ENCODE measurements at regions of chr6 and their contacts with region 1.

Region 1: GRCh38 chr6:142692942-142693341 is 252.0 kb downstream of the HIVEP2 start:
- DNase-seq: peak; percentile 56 to 66
- H3K4me3 ChIP-seq: no peak overlapping the region
- H3K4me3 Mint-ChIP-seq: no peak overlapping the region
- H3K27ac Mint-ChIP-seq: no peak overlapping the region
- H3K4me1 ChIP-seq: no peaks in the 10 kb centered on the region
- H3K4me1 Mint-ChIP-seq: no peaks in the 10 kb centered on the region
- H3K27me3 ChIP-seq: no peaks in the 10 kb centered on the region; the same call in 1 of the 2 replicates
- H3K27me3 Mint-ChIP-seq: peaks cover 3% of the 10 kb centered on the region
- CTCF ChIP-seq: peak; percentile 81 to 90

Region 2: DNA sequence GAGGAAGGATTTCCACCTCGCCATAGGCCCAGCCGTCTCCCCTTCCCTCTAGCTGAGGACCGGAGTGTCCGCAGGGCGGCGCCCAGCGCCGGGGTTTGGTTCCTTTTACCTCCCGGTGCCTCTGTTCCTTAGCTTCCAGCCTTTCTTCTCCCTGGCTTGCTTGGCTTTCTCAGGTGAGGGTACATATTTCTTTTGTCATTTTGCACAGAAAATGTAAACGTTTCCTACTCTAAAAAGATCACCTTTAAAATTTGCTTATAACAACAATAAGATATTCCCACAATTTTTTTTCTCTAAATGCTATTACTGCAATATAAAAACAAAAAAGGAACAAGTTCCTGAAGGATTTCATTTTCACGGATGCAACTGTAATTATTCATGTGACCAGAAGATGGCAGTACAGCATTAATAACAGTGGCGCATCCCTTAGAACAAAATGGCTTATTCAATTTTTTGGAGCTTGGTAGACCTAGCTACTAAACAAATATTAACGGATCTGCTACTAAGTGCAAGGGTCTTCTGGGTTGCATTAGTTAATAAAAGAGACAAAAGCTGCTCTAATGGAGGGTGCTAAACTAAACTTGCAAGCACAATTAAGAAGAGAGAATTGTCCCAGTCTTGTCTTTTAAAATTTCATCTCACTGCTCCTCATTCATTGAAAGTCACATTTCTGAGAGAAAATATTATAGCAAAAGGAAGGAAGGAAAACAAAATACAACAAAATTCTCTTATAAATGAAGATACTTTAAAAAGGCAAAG is 218.2 kb before region 1 on chr6:
- CTCF ChIA-PET with region 1: interaction called, 4 read pairs
- POLR2A ChIA-PET with region 1: no interaction called
- intact Hi-C with region 1: loop called (anchors 1 kb)
- DNase-seq: peak; percentile 67 to 69
- H3K4me3 ChIP-seq: no peak overlapping the region
- H3K4me3 Mint-ChIP-seq: no peak overlapping the region
- H3K27ac Mint-ChIP-seq: no peak overlapping the region
- H3K4me1 ChIP-seq: no peaks in the 10 kb centered on the region
- H3K4me1 Mint-ChIP-seq: no peaks in the 10 kb centered on the region
- H3K27me3 ChIP-seq: no peaks in the 10 kb centered on the region
- H3K27me3 Mint-ChIP-seq: peaks cover 1% of the 10 kb centered on the region
- CTCF ChIP-seq: peak; percentile 57 to 60

Region 3: DNA sequence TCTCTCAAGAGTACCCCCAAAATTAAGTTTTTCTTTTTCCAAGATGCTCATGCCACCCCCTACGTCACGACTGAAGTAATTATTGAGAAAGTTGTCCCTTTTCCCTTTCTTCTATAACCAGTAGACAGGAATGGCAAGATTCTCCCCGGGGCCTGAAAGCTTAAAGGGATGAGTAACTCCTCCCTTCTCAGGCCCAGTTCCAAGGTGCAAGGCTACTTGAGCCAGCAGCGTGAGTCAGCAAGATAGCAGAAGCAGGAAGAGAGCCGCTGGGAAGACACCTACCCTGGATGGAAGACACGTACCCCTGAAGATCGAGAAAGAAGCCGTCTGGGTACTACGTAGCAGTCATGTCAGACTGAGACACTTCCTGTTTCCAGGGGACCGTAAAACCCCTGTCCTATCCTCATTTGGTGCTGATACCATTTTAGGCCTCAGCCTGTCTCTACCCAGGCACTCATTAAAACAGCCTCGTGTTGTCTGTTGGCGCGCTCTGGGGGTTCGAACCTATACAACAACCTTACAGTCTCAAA is 150.2 kb before region 1 on chr6:
- CTCF ChIA-PET with region 1: no interaction called
- POLR2A ChIA-PET with region 1: no interaction called
- intact Hi-C with region 1: no loop called
- DNase-seq: peak in 1 of 2 experiments; percentile 43
- H3K4me3 ChIP-seq: no peak overlapping the region
- H3K4me3 Mint-ChIP-seq: no peak overlapping the region
- H3K27ac Mint-ChIP-seq: no peak overlapping the region
- H3K4me1 ChIP-seq: no peaks in the 10 kb centered on the region
- H3K4me1 Mint-ChIP-seq: no peaks in the 10 kb centered on the region
- H3K27me3 ChIP-seq: no peaks in the 10 kb centered on the region; the same call in 1 of the 2 replicates
- H3K27me3 Mint-ChIP-seq: no peaks in the 10 kb centered on the region
- CTCF ChIP-seq: no peak

Region 4: DNA sequence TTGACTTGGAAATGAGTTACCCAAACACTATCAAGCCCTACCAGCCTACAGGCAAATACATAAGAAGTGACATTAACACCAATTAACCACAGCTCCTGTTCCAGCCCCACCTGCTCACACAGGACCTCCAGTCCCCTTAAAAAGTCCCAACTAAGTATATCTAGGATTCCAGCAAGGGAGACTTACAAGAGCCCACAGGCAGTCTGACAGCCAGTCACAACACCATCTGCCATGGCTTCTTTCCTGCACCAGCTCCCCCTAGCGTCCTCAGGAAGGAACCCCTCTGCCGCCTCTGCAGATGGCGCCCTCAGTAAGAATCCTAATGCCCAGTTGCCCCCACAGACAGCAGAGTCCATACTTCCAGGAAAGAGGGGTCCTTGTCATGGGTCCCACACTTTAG is 129.9 kb after region 1 on chr6:
- CTCF ChIA-PET with region 1: no interaction called
- POLR2A ChIA-PET with region 1: no interaction called
- intact Hi-C with region 1: loop called (anchors 1 kb)
- DNase-seq: peak in 1 of 2 experiments; percentile 50
- H3K4me3 ChIP-seq: no peak overlapping the region
- H3K4me3 Mint-ChIP-seq: no peak overlapping the region
- H3K27ac Mint-ChIP-seq: no peak overlapping the region
- H3K4me1 ChIP-seq: no peaks in the 10 kb centered on the region
- H3K4me1 Mint-ChIP-seq: peaks cover 6% of the 10 kb centered on the region
- H3K27me3 ChIP-seq: no peaks in the 10 kb centered on the region
- H3K27me3 Mint-ChIP-seq: no peaks in the 10 kb centered on the region
- CTCF ChIP-seq: peak; percentile 29 to 57

Region 5: DNA sequence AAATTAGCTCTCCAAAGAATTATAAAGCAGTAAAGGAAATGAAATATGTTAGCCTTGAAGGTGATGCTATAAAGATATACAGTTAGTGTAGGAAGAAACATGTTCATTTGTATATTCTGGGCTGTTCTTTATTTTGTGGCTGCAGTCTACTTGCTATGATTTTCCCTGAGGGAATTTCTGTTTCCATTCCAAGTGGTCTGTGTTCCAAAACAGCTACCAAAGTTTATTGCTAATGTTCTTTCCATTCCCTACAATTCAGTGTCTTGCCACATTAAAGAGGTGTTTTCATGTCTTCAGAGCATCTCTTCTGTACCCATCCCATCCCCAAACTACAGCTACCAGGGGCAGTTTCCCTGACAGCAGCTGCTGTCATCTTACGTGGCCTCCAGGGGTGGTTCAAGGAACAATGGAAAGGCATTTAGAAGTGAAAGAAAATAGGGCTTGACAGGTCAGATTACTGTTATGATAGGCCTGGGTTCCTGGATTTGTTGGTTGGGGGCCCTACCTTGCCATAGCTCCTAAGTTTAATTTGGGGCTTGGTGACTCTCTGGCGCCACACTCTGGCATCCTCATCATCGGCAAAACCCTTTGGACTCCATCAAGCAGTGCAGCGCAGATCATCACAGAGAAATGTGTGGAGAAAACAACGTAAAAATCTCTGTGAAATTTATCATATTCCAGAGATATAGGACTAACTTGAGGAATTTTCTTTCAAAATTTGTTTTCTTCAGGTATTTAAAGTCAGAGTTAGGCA is 333.9 kb after region 1 on chr6:
- CTCF ChIA-PET with region 1: interaction called, 4 read pairs
- POLR2A ChIA-PET with region 1: no interaction called
- intact Hi-C with region 1: loop called (anchors 1 kb)
- DNase-seq: peak in 1 of 2 experiments; percentile 25
- H3K4me3 ChIP-seq: no peak overlapping the region
- H3K4me3 Mint-ChIP-seq: no peak overlapping the region
- H3K27ac Mint-ChIP-seq: no peak overlapping the region
- H3K4me1 ChIP-seq: no peaks in the 10 kb centered on the region
- H3K4me1 Mint-ChIP-seq: no peaks in the 10 kb centered on the region
- H3K27me3 ChIP-seq: no peaks in the 10 kb centered on the region
- H3K27me3 Mint-ChIP-seq: no peaks in the 10 kb centered on the region
- CTCF ChIP-seq: peak; percentile 30 to 44

Region 6: GRCh38 chr6:143337201-143337949 is 644.4 kb after region 1 on chr6:
- CTCF ChIA-PET with region 1: interaction called, 3 read pairs
- POLR2A ChIA-PET with region 1: no interaction called
- intact Hi-C with region 1: loop called (anchors 2 kb)
- DNase-seq: peak; percentile 62 to 73
- H3K4me3 ChIP-seq: no peak overlapping the region
- H3K4me3 Mint-ChIP-seq: no peak overlapping the region
- H3K27ac Mint-ChIP-seq: no peak overlapping the region
- H3K4me1 ChIP-seq: no peaks in the 10 kb centered on the region
- H3K4me1 Mint-ChIP-seq: no peaks in the 10 kb centered on the region
- H3K27me3 ChIP-seq: no peaks in the 10 kb centered on the region
- H3K27me3 Mint-ChIP-seq: no peaks in the 10 kb centered on the region
- CTCF ChIP-seq: peak; percentile 57 to 61

Region 7: DNA sequence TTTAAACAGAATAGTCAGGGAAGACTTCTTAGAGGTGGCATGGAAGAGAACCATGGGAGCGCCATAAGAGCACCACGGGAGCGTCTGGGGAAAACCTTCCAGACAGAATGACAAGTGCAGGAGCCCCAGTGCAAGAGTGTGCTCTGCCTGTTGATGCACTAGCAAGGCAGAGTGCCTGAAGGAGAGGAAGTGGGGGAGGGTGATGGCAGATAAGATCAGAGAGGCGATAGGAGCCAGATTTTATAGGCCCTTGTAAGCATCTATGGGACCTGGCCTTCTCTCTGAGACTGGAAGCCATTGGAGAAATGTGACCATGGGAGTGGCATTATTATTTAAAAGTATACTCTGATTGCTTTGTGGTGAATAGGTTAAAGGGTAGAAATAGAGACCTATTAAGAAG is 805.5 kb after region 1 on chr6:
- CTCF ChIA-PET with region 1: no interaction called
- POLR2A ChIA-PET with region 1: no interaction called
- intact Hi-C with region 1: loop called (anchors 10 kb)
- DNase-seq: no peak
- H3K4me3 ChIP-seq: no peak overlapping the region
- H3K4me3 Mint-ChIP-seq: no peak overlapping the region
- H3K27ac Mint-ChIP-seq: no peak overlapping the region
- H3K4me1 ChIP-seq: no peaks in the 10 kb centered on the region
- H3K4me1 Mint-ChIP-seq: peaks cover 12% of the 10 kb centered on the region
- H3K27me3 ChIP-seq: no peaks in the 10 kb centered on the region
- H3K27me3 Mint-ChIP-seq: no peaks in the 10 kb centered on the region
- CTCF ChIP-seq: no peak

Measured in Caco-2 (cell line).